GM18951 (cell line): ENCODE measurements at regions of chr4 and their contacts with region 1.

Region 1: DNA sequence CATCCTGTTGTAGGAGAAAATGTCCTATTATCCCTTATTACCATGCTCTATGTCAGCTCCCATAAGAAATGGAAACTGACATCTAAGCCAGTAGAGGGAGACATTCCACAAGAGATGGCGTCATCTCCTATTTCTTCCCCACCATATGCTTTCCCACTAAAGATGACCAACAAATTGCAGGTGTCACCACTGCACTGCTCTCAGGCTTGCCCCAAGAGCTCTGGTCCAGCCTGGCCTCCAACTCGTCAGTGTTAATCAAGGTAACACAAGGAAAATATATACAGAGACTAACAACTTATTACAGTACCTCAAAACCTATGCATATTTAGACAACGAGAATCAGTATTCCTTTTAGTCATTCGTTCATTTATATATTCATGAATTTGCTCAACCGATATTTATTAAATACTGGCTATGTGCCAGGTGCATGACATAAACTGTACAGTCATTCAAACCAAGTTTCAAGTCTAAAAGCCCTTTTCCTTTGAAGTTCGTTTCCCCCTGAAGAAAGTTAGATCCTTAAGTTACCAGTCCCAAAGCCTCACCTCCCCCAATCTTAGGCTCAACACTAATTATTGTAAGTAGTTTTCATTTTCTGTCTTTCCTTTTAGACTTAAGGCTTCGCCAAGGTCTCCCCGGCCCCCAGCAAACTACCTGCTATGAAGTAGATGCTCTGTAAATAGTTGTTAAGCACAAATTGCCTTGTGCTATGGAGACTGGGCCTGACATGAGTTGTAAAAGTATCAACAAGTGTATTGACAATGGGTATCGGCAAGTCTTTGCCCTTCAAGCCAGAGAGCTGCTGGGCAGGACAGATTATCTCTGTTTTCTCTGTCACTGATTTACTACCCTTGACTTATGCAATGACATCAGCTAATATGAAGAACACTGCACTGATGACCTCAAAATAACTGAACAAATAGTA is 3.1 kb upstream of the FGB start:
- POLR2A ChIP-seq: no peak

Region 2: DNA sequence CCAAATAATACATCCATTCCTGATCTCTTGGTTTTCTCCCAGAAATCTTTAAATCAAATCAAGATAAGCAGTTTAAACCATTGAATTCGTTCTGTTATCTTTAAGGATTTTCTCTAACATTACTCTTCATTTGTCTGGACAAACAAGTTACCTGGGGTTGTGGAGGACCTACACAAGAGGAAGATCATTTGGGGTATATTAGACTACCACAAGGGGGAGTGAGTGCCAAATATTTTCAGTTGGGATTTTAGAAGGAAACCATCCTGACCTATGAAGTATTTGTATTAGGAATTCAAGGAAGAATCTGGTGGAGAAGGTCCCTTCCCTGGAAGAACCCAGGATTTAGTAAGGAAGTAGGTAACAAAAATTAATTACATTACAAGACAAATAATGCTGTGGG is 56.2 kb before region 1 on chr4:
- in situ Hi-C with region 1: no loop called
- POLR2A ChIP-seq: no peak

Region 3: GRCh38 chr4:154618708-154619315 is 59.1 kb after region 1 on chr4:
- in situ Hi-C with region 1: loop called (anchors 5 kb)
- POLR2A ChIP-seq: no peak